AG04450 (cell line): ENCODE measurements at regions of chr17 and their contacts with region 1.

Region 1: GRCh38 chr17:37650419-37651003 is 7.3 kb upstream of the DDX52 start:
- DNase-seq: no peak
- H3K4me3 ChIP-seq: no peak overlapping the region
- H3K27ac ChIP-seq: no peak overlapping the region
- H3K27me3 ChIP-seq: no peaks in the 10 kb centered on the region
- CTCF ChIP-seq: peak; percentile 52

Region 2: DNA sequence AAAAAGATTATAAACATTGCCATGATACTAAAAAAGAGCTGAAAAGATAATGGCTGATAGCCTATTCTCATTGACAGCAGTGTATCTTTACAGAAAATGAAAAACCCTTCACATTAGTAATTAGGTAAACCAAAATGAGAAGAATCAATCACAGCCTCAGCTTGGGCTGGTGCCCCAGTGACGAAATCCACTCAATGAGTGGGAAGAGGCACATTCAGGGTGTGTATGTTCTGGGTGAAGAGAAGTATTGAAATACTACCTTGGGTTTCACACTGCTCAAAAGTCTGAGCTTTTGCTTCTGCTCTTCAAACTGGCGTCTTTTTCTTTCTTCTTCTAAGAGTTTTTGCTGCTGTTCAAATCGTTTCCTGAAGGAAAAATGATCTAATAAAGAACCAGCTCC is 65.4 kb before region 1 on chr17:
- CTCF ChIA-PET with region 1: no interaction called
- POLR2A ChIA-PET with region 1: no interaction called
- DNase-seq: no peak
- H3K4me3 ChIP-seq: no peak overlapping the region
- H3K27ac ChIP-seq: no peak overlapping the region
- H3K27me3 ChIP-seq: no peaks in the 10 kb centered on the region
- CTCF ChIP-seq: no peak

Region 3: GRCh38 chr17:37614823-37615222 is 35.7 kb before region 1 on chr17:
- CTCF ChIA-PET with region 1: no interaction called
- POLR2A ChIA-PET with region 1: no interaction called
- DNase-seq: no peak
- H3K4me3 ChIP-seq: no peak overlapping the region
- H3K27ac ChIP-seq: peak overlapping the region; percentile 66
- H3K27me3 ChIP-seq: no peaks in the 10 kb centered on the region
- CTCF ChIP-seq: no peak

Region 4: DNA sequence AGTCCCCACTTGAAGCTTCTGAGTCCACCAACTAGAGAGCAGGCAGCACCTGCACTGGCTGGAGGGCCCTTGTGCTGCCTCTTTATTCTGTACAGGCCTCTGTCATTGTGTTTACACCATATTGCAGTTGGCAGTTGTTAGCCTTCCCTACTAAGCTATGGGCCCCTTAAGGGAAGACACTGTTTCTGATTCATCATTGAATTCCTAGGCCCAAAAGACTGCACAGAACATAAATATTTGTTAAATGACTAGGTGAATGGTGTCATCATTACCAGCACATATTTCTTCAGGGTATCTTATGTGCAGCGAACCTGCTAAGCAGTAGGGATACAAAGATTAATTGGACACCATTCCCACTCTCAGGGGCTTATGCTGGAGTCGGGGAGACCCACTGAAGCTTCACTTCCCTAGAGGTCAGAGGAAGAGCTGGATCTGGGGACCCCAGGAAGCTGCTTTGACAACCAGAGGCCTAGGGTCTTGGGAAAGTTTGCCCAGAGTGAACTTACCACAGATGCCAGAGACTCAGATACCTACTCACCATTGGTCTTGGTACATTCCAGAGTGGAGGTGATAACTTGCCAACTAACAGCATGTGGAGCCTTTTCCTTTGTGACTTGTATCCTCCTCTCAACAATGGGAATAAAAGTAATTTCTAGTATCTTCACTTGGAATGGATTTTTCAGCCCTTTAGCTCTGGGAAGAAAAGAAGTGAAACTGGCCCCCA is 21.5 kb after region 1 on chr17:
- CTCF ChIA-PET with region 1: interaction called, 10 read pairs
- POLR2A ChIA-PET with region 1: no interaction called
- DNase-seq: peak; percentile 82
- H3K4me3 ChIP-seq: no peak overlapping the region
- H3K27ac ChIP-seq: peak overlapping the region; percentile 86
- H3K27me3 ChIP-seq: no peaks in the 10 kb centered on the region
- CTCF ChIP-seq: no peak

Region 5: DNA sequence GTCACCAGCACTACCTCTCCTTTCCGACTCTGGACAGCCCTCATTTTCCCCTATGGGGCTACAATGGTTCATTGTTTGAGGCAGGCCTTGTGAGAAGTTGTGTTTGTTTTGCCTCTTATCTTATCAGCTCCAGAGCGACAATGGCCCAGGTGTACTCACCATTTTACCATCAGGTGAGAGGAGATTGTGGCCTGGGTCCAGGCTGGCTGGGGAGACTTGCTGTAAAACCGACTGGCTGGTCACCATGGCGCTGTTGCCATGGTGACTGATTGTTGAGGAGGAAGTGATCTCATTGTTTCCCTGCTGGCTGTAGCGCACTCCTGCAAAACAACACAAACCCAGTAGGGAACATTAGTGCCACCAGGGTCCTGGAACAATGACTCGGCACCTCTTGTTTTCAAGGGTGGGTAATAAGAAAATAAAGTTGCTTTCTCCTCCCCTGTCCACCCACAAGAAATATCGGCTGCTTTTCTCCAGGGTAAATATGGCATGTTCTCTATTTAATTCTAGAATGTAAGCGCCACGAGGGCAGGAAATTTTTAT is 59.9 kb after region 1 on chr17:
- CTCF ChIA-PET with region 1: interaction called, 10 read pairs
- POLR2A ChIA-PET with region 1: no interaction called
- DNase-seq: no peak
- H3K4me3 ChIP-seq: no peak overlapping the region
- H3K27ac ChIP-seq: no peak overlapping the region
- H3K27me3 ChIP-seq: peaks cover 6% of the 10 kb centered on the region
- CTCF ChIP-seq: no peak